ENCODE measurements at regions of chr14 and their contacts with region 1.

Region 1: GRCh38 chr14:65412032-65412846 is at the start of gene FUT8:
- DNase-seq: peak; percentile 93
- H3K4me3 ChIP-seq: peak within 1 kb of the TSS; percentile 79
- H3K27ac ChIP-seq: peak within 1 kb of the TSS; percentile 95
- H3K27me3 ChIP-seq: no peaks in the 10 kb centered on the region
- CTCF ChIP-seq: peak; percentile 61
- polyA plus RNA-seq, gene FUT8: 42.0 and 45.1 TPM in 2 replicates

Region 2: GRCh38 chr14:65170768-65171507 is 241.3 kb before region 1 on chr14:
- CTCF ChIA-PET with region 1: interaction called, 95 read pairs
- POLR2A ChIA-PET with region 1: interaction called, 20 read pairs
- DNase-seq: peak; percentile 36
- H3K4me3 ChIP-seq: peak overlapping the region; percentile 50
- H3K27ac ChIP-seq: peak overlapping the region; percentile 23
- H3K27me3 ChIP-seq: no peaks in the 10 kb centered on the region
- CTCF ChIP-seq: peak; percentile 58

Region 3: GRCh38 chr14:65333943-65334687 is 78.1 kb before region 1 on chr14:
- CTCF ChIA-PET with region 1: interaction called, 4 read pairs
- POLR2A ChIA-PET with region 1: interaction called, 10 read pairs
- DNase-seq: peak; percentile 77
- H3K4me3 ChIP-seq: no peak overlapping the region
- H3K27ac ChIP-seq: peak overlapping the region; percentile 73
- H3K27me3 ChIP-seq: no peaks in the 10 kb centered on the region
- CTCF ChIP-seq: no peak

Region 4: GRCh38 chr14:65517635-65518542 is 105.7 kb after region 1 on chr14:
- CTCF ChIA-PET with region 1: no interaction called
- POLR2A ChIA-PET with region 1: no interaction called
- DNase-seq: no peak
- H3K4me3 ChIP-seq: no peak overlapping the region
- H3K27ac ChIP-seq: no peak overlapping the region
- H3K27me3 ChIP-seq: no peaks in the 10 kb centered on the region
- CTCF ChIP-seq: no peak

Region 5: GRCh38 chr14:65824285-65824977 is 412.2 kb after region 1 on chr14:
- CTCF ChIA-PET with region 1: interaction called, 359 read pairs
- POLR2A ChIA-PET with region 1: interaction called, 3 read pairs
- DNase-seq: peak; percentile 41
- H3K4me3 ChIP-seq: no peak overlapping the region
- H3K27ac ChIP-seq: no peak overlapping the region
- H3K27me3 ChIP-seq: peaks cover 21% of the 10 kb centered on the region
- CTCF ChIP-seq: peak; percentile 97

Region 6: DNA sequence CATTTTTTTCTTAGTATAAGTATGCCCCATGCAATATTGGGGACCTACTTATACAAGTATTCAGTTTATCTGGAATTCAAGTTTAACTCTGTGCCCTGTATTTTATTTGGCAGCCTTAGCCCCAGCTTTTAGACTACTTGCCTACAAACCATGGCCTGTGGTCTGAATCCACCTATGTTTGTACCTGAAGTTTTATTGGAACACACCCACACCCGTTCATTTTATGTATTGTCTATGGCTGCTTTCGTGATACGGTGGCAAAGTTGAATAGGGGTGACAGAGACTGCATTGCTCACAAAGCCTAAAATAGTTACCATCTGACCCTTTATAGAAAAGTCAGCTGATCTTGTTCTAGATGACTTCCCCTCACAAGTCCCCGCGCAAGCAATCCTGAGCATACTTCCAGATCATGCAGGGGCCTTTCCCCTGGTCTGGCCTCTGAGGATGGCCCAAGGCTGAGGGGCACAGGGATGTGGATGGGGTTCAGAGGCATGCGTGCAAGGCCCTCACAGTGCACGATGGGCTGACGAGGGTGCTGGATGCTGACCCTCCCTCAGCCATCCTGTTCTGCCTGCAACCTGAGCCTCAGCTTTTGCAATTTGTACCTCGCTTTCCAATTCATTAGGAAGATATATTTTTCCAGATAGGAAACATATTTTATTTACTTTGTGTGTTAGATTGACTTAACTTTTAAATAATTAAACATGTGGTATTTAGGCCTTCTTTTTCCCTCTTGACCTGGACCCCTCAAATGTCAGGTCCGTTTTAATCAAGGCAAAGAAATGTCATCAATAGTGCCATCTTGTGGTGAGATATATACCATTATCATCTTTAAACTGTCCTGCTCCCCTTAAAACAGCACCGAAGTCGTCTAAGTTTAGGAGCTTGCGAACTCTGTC is 546.7 kb after region 1 on chr14:
- CTCF ChIA-PET with region 1: interaction called, 65 read pairs
- POLR2A ChIA-PET with region 1: no interaction called
- DNase-seq: no peak
- H3K4me3 ChIP-seq: no peak overlapping the region
- H3K27ac ChIP-seq: no peak overlapping the region
- H3K27me3 ChIP-seq: no peaks in the 10 kb centered on the region
- CTCF ChIP-seq: peak; percentile 41